ENCODE measurements at regions of chrX and their contacts with region 1.

Region 1: DNA sequence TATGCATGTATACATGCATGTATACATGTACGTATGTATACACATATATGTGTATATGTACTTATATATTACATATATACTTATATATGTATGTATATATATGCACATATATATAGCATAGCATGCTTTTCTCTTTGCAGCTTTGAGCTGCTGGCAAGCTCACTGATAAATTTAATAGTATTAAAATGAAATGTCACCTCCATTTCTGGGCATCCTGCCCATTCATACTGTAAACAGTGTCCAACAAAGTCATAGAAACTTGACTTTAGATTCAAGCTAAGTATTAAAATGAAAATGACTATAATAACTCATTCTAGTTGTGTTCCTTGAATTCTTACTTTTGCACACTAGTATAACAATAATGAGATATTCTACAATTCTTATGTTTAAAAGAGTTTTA is 163.7 kb downstream of the CFAP47 start:
- DNase-seq: no peak
- ATAC-seq: no peak

Region 2: GRCh38 chrX:35416783-35417182 is 666.5 kb before region 1 on chrX:
- intact Hi-C with region 1: loop called (anchors 5 kb)
- DNase-seq: no peak
- ATAC-seq: no peak